OCI-LY7 (cell line): ENCODE measurements at regions of chr19 and their contacts with region 1.

Region 1: GRCh38 chr19:20565321-20566018 is at the start of gene ZNF737:
- DNase-seq: peak; percentile 98
- H3K4me3 ChIP-seq: peak within 1 kb of the TSS; percentile 97
- H3K27ac ChIP-seq: peak within 1 kb of the TSS; percentile 74
- H3K4me1 ChIP-seq: peaks cover 8% of the 10 kb centered on the region
- CTCF ChIP-seq: peak; percentile 36; the same call in 1 of the 2 replicates
- total RNA-seq, gene ZNF737: 23.7 and 33.5 TPM in 2 replicates

Region 2: DNA sequence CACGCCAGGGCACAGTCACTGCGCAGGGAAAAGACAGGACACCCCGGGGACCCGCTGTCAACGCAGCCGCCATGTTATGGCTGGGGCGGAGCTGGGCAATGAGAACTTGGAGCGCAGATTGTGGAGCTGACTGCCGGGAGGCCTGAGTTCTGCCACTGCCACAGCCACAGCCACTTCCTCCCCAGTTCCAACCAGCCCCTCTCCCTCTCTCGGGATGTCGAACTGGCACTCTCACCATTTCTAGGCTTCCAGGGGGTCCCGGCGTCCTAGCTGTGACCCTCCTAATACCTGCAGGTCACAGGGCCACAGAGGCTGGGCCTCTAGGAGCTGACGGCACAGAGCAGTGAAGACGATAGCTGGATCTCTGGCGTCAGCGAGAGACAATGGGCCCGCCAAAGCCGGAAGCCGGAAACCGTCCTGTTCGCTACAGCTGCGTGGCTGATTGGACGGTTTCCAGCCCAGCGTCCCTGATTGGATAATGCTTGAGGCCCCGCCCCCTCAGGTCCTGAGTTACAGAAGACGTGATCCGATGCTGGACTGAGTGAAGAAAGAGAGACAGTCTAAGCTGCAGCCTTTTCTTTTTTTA is 744.0 kb before region 1 on chr19 and contains the start of gene ZNF506:
- CTCF ChIA-PET with region 1: no interaction called
- POLR2A ChIA-PET with region 1: no interaction called
- intact Hi-C with region 1: loop called (anchors 10 kb)
- DNase-seq: peak; percentile 99
- H3K4me3 ChIP-seq: peak within 1 kb of the TSS; percentile 87
- H3K27ac ChIP-seq: peak within 1 kb of the TSS; percentile 76
- H3K4me1 ChIP-seq: peaks cover 4% of the 10 kb centered on the region
- CTCF ChIP-seq: no peak
- total RNA-seq, gene ZNF506: 22.1 and 36.4 TPM in 2 replicates

Region 3: GRCh38 chr19:20237761-20238623 is 327.5 kb before region 1 on chr19:
- CTCF ChIA-PET with region 1: no interaction called
- POLR2A ChIA-PET with region 1: interaction called, 15 read pairs
- intact Hi-C with region 1: no loop called
- DNase-seq: peak; percentile 97
- H3K4me3 ChIP-seq: peak overlapping the region; percentile 89
- H3K27ac ChIP-seq: peak overlapping the region; percentile 78
- H3K4me1 ChIP-seq: peaks cover 28% of the 10 kb centered on the region
- CTCF ChIP-seq: peak; percentile 27; the same call in 1 of the 2 replicates

Region 4: GRCh38 chr19:20294181-20294580 is 271.3 kb before region 1 on chr19:
- CTCF ChIA-PET with region 1: no interaction called
- POLR2A ChIA-PET with region 1: no interaction called
- intact Hi-C with region 1: no loop called
- DNase-seq: no peak
- H3K4me3 ChIP-seq: no peak overlapping the region
- H3K27ac ChIP-seq: no peak overlapping the region
- H3K4me1 ChIP-seq: no peaks in the 10 kb centered on the region
- CTCF ChIP-seq: no peak

Region 5: GRCh38 chr19:20776083-20777076 is 210.9 kb after region 1 on chr19 and contains the start of gene ZNF66:
- CTCF ChIA-PET with region 1: no interaction called
- POLR2A ChIA-PET with region 1: interaction called, 11 read pairs
- intact Hi-C with region 1: loop called (anchors 2 kb)
- DNase-seq: peak; percentile 99
- H3K4me3 ChIP-seq: peak within 1 kb of the TSS; percentile 85
- H3K27ac ChIP-seq: peak within 1 kb of the TSS; percentile 77
- H3K4me1 ChIP-seq: peaks cover 3% of the 10 kb centered on the region
- CTCF ChIP-seq: no peak
- total RNA-seq, gene ZNF66: 32.4 and 34.2 TPM in 2 replicates

Region 6: DNA sequence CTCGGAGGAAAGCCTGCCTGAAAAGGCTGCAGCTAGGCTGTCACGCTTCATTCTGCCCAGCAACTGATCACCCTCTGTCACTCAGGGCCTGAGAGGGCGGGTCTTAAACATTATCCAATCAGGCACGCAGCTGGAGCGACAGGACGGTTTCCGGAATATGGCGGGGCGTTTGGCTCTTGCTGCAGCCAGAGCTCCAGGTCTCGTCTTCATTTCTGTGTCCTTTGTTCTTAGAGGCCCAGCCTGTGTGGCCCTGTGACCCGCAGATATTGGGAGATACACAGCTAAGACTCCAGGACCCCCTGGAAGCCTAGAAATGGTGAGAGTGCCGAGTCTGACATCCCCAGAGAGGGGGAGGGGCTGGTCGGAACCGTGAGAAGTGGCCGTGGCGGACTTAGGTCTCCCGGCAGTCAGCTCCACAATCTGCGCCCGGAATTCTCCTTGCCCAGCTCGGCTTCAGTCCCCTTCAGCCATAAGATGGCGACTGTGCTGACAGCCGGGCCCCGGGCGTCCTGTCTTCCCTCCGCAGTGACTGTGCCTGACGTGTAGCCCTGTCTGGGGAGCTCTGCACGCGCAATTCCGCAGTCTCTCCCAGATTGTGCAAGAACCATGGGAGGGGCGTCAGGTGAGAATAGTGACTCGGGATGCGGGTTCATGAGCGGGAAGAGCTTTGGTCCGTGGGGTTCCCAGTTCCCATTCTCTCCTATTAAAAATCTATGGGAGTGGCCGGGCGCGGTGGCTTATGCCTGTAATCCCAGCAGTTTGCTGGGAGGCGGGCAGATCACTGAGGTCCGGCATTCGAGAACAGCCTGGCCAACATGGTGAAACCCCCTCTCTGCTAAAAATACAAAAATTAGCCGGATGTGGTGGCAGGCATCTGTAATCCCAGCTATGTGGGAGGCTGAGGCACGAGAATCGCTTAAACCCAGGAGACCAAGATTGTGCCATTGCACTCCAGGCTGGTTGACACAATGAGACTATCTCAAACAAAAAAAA is 940.3 kb after region 1 on chr19 and contains the start of gene ZNF429:
- CTCF ChIA-PET with region 1: no interaction called
- POLR2A ChIA-PET with region 1: no interaction called
- intact Hi-C with region 1: loop called (anchors 10 kb)
- DNase-seq: peak; percentile 96
- H3K4me3 ChIP-seq: peak within 1 kb of the TSS; percentile 84
- H3K27ac ChIP-seq: peak within 1 kb of the TSS; percentile 67
- H3K4me1 ChIP-seq: peaks cover 11% of the 10 kb centered on the region
- CTCF ChIP-seq: no peak
- total RNA-seq, gene ZNF429: 12.8 and 19.8 TPM in 2 replicates